HCT116 (cell line): ENCODE measurements at regions of chr19 and their contacts with region 1.

Region 1: DNA sequence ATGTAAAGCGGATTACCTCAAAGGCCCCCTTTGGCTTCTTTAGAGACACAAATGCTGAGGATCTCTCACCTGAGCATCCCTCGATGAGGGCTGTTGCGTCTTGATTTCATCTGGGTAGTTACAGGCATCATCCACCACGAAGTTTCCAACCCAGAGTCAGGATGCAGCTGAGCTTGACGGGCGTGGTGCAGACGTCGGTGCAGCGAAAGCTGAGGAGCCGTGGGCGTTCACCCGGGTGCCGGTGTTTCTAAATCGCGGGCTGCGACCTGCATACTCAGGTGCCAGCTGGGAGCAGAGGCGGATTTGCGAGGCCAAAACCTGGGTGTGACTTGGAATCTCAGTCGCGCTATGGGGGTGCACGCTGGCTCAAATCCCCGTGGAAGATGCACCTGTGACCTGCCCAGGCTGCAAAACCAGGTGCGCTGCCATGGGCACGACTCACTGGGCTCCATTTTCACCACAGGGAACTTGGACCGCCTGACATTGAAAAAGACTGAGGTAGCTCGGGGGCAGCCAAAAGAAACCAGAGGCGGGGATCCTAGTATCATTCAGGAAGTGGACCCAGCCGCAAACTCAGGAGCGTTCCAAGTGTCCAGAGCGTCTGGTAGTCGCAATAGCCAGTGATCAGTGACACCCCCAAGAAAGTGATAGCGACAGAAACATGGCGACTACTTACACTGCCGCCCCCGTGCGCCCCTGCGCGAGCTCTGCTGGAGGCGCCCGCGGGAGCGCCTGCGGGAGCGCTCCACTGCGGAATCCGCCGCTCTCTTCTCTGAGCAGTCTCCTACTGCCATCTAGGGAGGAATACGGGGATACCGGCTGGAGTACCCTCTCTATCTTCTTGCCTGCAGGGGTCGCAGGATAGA is 36.4 kb upstream of the IGFL4 start:
- DNase-seq: peak; percentile 82
- ATAC-seq: peak; percentile 96
- H3K4me3 ChIP-seq: peak overlapping the region; percentile 39 to 54
- H3K27ac ChIP-seq: no peak overlapping the region
- H3K4me1 ChIP-seq: peaks cover 8 to 17% of the 10 kb centered on the region in 2 experiments; a peak in 2 of 4 replicates
- H3K27me3 ChIP-seq: peaks cover 71% of the 10 kb centered on the region
- CTCF ChIP-seq: peak; percentile 100
- POLR2A ChIP-seq: no peak
- RAD21 ChIP-seq: peak; percentile 99

Region 2: DNA sequence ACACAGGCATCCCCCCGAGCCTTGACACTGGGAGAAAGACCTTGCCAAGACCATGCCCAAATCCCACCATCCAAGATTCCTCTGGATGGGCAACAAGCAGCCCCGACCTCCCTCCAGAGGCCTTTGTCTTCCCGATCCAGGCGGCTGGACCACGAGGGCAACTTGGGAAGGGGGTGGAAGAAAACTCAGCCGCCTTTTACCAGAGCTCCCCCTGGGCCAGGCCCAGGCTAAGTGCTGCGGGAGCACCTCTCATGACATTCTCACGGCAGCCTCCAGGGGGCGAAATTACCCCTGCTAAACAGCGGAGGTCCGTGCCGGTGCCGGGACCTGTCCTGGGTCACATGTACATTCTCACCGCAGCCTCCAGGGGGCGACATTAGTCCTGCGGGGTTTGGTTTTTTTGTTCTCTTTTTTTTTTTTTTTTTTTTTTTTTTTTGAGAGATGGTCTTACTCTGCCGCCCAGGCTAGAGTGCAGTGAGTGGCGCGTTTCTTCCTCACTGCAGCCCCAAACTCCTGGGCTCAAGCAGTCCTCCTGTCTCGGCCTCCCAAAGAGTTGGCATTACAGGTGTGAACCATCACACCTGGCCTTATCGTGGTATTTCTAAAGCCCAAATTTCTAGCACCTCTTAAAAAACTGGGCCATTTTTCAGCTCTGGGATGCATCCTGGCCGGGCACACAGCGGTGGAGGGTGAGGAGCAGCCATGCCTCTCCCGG is 260.0 kb before region 1 on chr19:
- CTCF ChIA-PET with region 1: interaction called, 17 read pairs
- POLR2A ChIA-PET with region 1: no interaction called
- RAD21 ChIA-PET with region 1: no interaction called
- intact Hi-C with region 1: loop called (anchors 1 kb)
- DNase-seq: peak; percentile 90
- ATAC-seq: peak; percentile 93
- H3K4me3 ChIP-seq: no peak overlapping the region
- H3K27ac ChIP-seq: peak overlapping the region; percentile 50; the same call in 1 of the 2 replicates
- H3K4me1 ChIP-seq: peaks cover 3 to 11% of the 10 kb centered on the region in 2 experiments; a peak in 3 of 4 replicates
- H3K27me3 ChIP-seq: no peaks in the 10 kb centered on the region
- CTCF ChIP-seq: peak; percentile 99
- POLR2A ChIP-seq: no peak
- RAD21 ChIP-seq: peak; percentile 87

Region 3: DNA sequence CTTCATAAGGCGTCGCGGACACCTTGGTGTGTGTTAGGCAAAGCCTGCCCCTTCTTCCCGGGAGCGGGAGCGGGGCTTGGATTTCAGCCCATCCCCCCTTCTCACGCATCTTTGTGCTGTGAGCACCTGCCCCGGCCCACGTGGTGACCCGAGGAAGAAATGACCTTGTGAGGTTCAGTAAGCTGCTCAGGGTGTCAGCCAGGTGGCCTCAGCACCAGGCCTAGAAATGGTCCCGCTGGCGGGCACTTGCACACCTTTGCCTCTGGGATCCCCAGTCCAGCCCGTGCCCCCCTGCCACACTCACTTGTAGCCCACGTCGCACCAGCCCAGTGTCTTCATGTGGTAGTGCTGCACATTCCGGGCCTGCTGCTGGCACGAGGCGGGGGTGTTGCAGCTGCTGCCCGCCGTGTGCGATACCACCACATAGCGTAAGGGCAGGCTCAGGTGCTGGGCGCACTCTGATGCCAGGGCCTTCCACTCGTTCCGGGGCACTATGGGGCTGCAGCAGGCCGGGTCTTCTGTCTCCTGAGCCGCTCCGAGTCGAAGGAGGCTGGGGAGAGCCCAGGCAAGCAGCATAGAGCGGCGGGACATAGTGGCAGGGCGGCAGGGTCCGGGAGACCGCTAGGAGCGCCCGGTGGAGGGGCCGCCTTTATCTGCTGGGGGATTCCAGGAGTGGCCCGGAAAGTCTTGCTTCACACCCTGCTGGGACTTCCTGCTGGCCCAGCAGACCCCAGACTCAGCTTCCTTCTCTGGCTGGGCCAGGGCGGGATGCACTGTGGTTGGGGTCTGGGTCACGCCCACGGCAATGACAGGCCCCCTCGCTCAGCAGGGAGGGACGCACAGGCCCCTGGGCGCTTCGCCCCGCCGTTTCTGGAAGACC is 54.5 kb before region 1 on chr19 and contains the start of gene PGLYRP1:
- CTCF ChIA-PET with region 1: interaction called, 117 read pairs
- POLR2A ChIA-PET with region 1: interaction called, 4 read pairs
- RAD21 ChIA-PET with region 1: interaction called, 4 to 6 read pairs
- intact Hi-C with region 1: no loop called
- DNase-seq: no peak
- ATAC-seq: no peak
- H3K4me3 ChIP-seq: no peak within 1 kb of the TSS
- H3K27ac ChIP-seq: no peak within 1 kb of the TSS
- H3K4me1 ChIP-seq: peaks cover 0 to 9% of the 10 kb centered on the region in 2 experiments; a peak in 2 of 4 replicates
- H3K27me3 ChIP-seq: no peaks in the 10 kb centered on the region
- CTCF ChIP-seq: no peak
- POLR2A ChIP-seq: no peak
- RAD21 ChIP-seq: no peak
- total RNA-seq, gene PGLYRP1: not detected

Region 4: GRCh38 chr19:46192992-46193650 is 115.9 kb after region 1 on chr19:
- CTCF ChIA-PET with region 1: interaction called, 128 read pairs
- POLR2A ChIA-PET with region 1: no interaction called
- RAD21 ChIA-PET with region 1: interaction called, 7 to 12 read pairs
- intact Hi-C with region 1: loop called (anchors 1 kb)
- DNase-seq: no peak
- ATAC-seq: peak; percentile 77
- H3K4me3 ChIP-seq: peak overlapping the region in 1 of 2 experiments; percentile 14; a peak in 2 of 4 replicates
- H3K27ac ChIP-seq: no peak overlapping the region
- H3K4me1 ChIP-seq: peaks cover 4 to 16% of the 10 kb centered on the region in 2 experiments
- H3K27me3 ChIP-seq: peaks cover 31% of the 10 kb centered on the region; the same call in 1 of the 2 replicates
- CTCF ChIP-seq: no peak
- POLR2A ChIP-seq: no peak
- RAD21 ChIP-seq: no peak

Region 5: GRCh38 chr19:46487802-46488445 is 410.7 kb after region 1 on chr19:
- CTCF ChIA-PET with region 1: no interaction called
- POLR2A ChIA-PET with region 1: no interaction called
- RAD21 ChIA-PET with region 1: no interaction called
- intact Hi-C with region 1: loop called (anchors 10 kb)
- DNase-seq: peak; percentile 29
- ATAC-seq: peak; percentile 92
- H3K4me3 ChIP-seq: no peak overlapping the region; a peak in 1 of 4 replicates
- H3K27ac ChIP-seq: no peak overlapping the region
- H3K4me1 ChIP-seq: no peaks in the 10 kb centered on the region
- H3K27me3 ChIP-seq: no peaks in the 10 kb centered on the region
- CTCF ChIP-seq: peak; percentile 92 to 98 (median 95)
- POLR2A ChIP-seq: no peak
- RAD21 ChIP-seq: peak; percentile 98